Heart left ventricle (tissue), 16 donors: ENCODE measurements at regions of chr11 and their contacts with region 1.

Region 1: GRCh38 chr11:91187314-91187713 is 964.5 kb upstream of the CHORDC1 start:
- DNase-seq: no peak
- ATAC-seq: no peak
- H3K4me3 ChIP-seq: no peak overlapping the region
- H3K27ac ChIP-seq: no peak overlapping the region
- H3K4me1 ChIP-seq: no peaks in the 10 kb centered on the region
- H3K27me3 ChIP-seq: peaks cover 0 to 3% (median 0%) of the 10 kb centered on the region in 9 donors
- CTCF ChIP-seq: no peak
- POLR2A ChIP-seq: no peak

Region 2: DNA sequence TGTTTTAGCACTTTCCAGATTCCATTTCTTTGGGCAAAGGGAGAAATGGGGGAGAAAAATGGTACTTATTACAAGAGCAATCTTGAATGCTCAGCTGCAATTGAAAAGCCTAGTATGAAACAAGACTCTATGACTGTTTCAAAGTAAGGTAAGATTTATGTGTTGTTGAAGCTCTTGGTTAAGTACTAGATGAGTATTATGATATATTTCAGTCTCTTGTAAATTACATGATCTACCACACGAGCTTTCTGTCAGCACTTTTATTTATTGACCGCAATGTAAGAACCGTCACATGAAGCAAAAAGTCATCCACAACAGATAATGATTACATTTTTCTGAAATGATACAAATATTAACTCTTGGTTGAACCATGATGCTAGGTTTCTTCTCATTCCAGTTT is 57.7 kb before region 1 on chr11:
- intact Hi-C with region 1: loop called in 1 of 10 experiments (anchors 10 kb)
- DNase-seq: no peak
- ATAC-seq: no peak
- H3K4me3 ChIP-seq: no peak overlapping the region
- H3K27ac ChIP-seq: no peak overlapping the region
- H3K4me1 ChIP-seq: peaks cover 0 to 6% (median 0%) of the 10 kb centered on the region in 12 donors
- H3K27me3 ChIP-seq: no peaks in the 10 kb centered on the region
- CTCF ChIP-seq: no peak
- POLR2A ChIP-seq: no peak